ENCODE measurements at regions of chr10 and their contacts with region 1.

Region 1: DNA sequence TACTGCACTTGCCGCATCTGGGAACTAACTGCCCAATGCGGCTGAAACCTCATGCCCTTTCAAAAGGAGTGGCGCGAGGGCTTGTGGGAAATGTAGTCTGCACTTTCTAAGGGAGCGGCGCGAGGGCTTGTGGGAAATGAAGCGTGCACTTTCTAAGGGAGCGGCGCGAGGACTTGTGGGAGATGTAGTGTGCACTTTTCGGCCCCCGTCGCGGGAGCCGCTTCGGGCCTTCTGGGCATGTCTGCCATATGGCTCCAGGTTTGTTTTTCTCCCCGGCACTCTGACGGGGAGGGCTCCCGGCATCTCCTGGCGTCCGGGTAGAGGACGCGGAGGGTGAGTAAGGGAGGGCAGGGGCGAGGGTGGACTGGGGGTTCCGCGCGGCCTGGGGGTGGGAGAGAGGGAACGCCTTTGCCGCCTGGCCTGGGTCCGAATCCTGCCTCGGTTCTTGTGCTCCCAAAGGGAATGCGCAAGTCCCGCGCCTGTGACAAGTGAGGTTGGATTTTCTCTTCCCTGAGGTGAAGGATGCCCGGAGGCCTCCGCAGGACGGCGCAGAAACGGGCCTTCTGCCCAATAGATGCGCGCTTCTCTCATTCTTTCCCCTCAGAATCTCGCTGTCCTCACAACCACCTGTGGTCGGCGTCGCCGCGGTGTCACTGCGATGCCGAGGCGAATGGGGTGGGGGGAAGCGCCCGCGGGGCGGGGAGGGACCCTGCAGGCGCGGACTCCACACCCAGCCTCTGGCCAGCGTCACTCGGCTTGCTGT is at the start of gene ZNF37A:
- DNase-seq: peak; percentile 82 to 94 (median 85)
- H3K4me3 ChIP-seq: peak within 1 kb of the TSS; percentile 59 to 87
- H3K4me3 Mint-ChIP-seq: peak within 1 kb of the TSS; percentile 91 to 94 (median 93)
- H3K27ac ChIP-seq: peak within 1 kb of the TSS; percentile 86
- H3K27ac Mint-ChIP-seq: peak within 1 kb of the TSS; percentile 90 to 98 (median 95)
- H3K4me1 ChIP-seq: peaks cover 18% of the 10 kb centered on the region
- H3K4me1 Mint-ChIP-seq: peaks cover 21 to 41% (median 31%) of the 10 kb centered on the region in 4 donors
- H3K27me3 ChIP-seq: no peaks in the 10 kb centered on the region
- H3K27me3 Mint-ChIP-seq: peaks cover 0 to 2% of the 10 kb centered on the region in 2 donors
- total RNA-seq, gene ZNF37A: 22.8 to 27.1 TPM

Region 2: GRCh38 chr10:37857287-37858211 is 236.8 kb before region 1 on chr10 and contains the start of gene ZNF248:
- CTCF ChIA-PET with region 1: no interaction called
- POLR2A ChIA-PET with region 1: interaction called, 3 read pairs
- intact Hi-C with region 1: loop called (anchors 1 kb)
- DNase-seq: peak; percentile 94 to 96 (median 95)
- H3K4me3 ChIP-seq: peak within 1 kb of the TSS; percentile 86 to 92
- H3K4me3 Mint-ChIP-seq: peak within 1 kb of the TSS; percentile 87 to 99 (median 91)
- H3K27ac ChIP-seq: peak within 1 kb of the TSS; percentile 97
- H3K27ac Mint-ChIP-seq: peak within 1 kb of the TSS; percentile 92 to 99 (median 98)
- H3K4me1 ChIP-seq: peaks cover 19% of the 10 kb centered on the region
- H3K4me1 Mint-ChIP-seq: peaks cover 28 to 48% (median 38%) of the 10 kb centered on the region in 4 donors
- H3K27me3 ChIP-seq: no peaks in the 10 kb centered on the region
- H3K27me3 Mint-ChIP-seq: no peaks in the 10 kb centered on the region
- total RNA-seq, gene ZNF248: 18.0 to 18.7 TPM

Region 3: GRCh38 chr10:37976091-37976879 is 118.1 kb before region 1 on chr10 and contains the start of gene ZNF25:
- CTCF ChIA-PET with region 1: interaction called, 25 read pairs
- POLR2A ChIA-PET with region 1: interaction called, 28 read pairs
- intact Hi-C with region 1: loop called (anchors 1 kb)
- DNase-seq: peak; percentile 96 to 99 (median 97)
- H3K4me3 ChIP-seq: peak within 1 kb of the TSS; percentile 77 to 85
- H3K4me3 Mint-ChIP-seq: peak within 1 kb of the TSS; percentile 86 to 98 (median 93)
- H3K27ac ChIP-seq: peak within 1 kb of the TSS; percentile 94
- H3K27ac Mint-ChIP-seq: peak within 1 kb of the TSS; percentile 96 to 99 (median 97)
- H3K4me1 ChIP-seq: peaks cover 22% of the 10 kb centered on the region
- H3K4me1 Mint-ChIP-seq: peaks cover 20 to 31% (median 25%) of the 10 kb centered on the region in 4 donors
- H3K27me3 ChIP-seq: no peaks in the 10 kb centered on the region
- H3K27me3 Mint-ChIP-seq: no peaks in the 10 kb centered on the region
- total RNA-seq, gene ZNF25: 13.6 to 14.7 TPM

Region 4: DNA sequence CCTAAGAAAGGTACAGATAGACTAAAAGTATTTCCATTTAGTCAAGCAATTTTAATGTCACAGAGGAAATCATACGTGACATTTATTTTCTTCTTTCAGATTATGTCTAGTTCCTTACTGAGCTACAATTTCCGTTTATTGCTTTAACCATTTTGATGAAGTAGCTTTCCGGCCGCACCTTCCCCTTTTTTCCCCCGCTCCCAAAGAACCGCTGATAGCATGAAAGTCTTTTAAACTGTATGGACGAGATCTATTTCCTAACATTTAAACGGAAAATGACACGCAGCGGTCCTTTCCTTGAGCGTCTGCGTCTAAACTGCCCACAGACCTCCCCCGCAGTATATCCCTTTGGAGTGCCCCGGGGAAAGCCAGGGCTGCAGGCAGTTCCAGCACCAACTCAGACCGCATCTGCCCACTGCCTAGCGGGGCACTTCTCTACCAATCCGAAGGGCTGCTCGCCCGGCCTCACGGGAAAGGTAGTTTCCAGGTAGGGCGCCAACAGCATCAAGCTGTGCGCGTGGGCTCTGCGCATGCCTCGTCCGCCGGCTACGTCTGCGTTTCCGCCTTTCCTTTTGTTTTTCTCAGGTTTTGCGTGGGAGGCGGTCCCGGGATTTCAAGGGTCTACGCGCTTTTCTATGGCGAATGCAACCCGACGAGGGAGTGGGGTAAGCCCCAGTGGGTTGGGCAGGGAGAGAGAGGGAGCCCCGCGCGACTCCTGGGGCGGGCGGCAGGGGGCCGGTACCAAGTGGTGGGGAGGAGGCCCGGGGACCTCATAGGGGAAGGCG is 84.0 kb before region 1 on chr10 and contains the start of gene ZNF33A:
- CTCF ChIA-PET with region 1: interaction called, 5 read pairs
- POLR2A ChIA-PET with region 1: interaction called, 14 read pairs
- intact Hi-C with region 1: loop called (anchors 1 kb)
- DNase-seq: peak; percentile 93 to 96 (median 94)
- H3K4me3 ChIP-seq: peak within 1 kb of the TSS; percentile 69 to 83
- H3K4me3 Mint-ChIP-seq: peak within 1 kb of the TSS; percentile 86 to 98 (median 94)
- H3K27ac ChIP-seq: peak within 1 kb of the TSS; percentile 91
- H3K27ac Mint-ChIP-seq: peak within 1 kb of the TSS; percentile 99 to 100 (median 100)
- H3K4me1 ChIP-seq: peaks cover 37% of the 10 kb centered on the region
- H3K4me1 Mint-ChIP-seq: peaks cover 22 to 53% (median 38%) of the 10 kb centered on the region in 4 donors
- H3K27me3 ChIP-seq: no peaks in the 10 kb centered on the region
- H3K27me3 Mint-ChIP-seq: no peaks in the 10 kb centered on the region
- total RNA-seq, gene ZNF33A: 69.0 to 71.4 TPM

Region 5: GRCh38 chr10:38038107-38038931 is 56.0 kb before region 1 on chr10:
- CTCF ChIA-PET with region 1: no interaction called
- POLR2A ChIA-PET with region 1: no interaction called
- intact Hi-C with region 1: loop called (anchors 2 kb)
- DNase-seq: peak; percentile 11 to 45 (median 33)
- H3K4me3 ChIP-seq: peak overlapping the region; percentile 20 to 34
- H3K4me3 Mint-ChIP-seq: peak overlapping the region; percentile 81 to 91 (median 88)
- H3K27ac ChIP-seq: peak overlapping the region; percentile 66
- H3K27ac Mint-ChIP-seq: peak overlapping the region; percentile 71 to 98 (median 95)
- H3K4me1 ChIP-seq: peaks cover 36% of the 10 kb centered on the region
- H3K4me1 Mint-ChIP-seq: peaks cover 36 to 54% (median 37%) of the 10 kb centered on the region in 4 donors
- H3K27me3 ChIP-seq: no peaks in the 10 kb centered on the region
- H3K27me3 Mint-ChIP-seq: no peaks in the 10 kb centered on the region

Region 6: GRCh38 chr10:38076687-38077086 is 17.7 kb before region 1 on chr10:
- CTCF ChIA-PET with region 1: no interaction called
- POLR2A ChIA-PET with region 1: no interaction called
- intact Hi-C with region 1: no loop called
- DNase-seq: no peak
- H3K4me3 ChIP-seq: no peak overlapping the region
- H3K4me3 Mint-ChIP-seq: no peak overlapping the region
- H3K27ac ChIP-seq: no peak overlapping the region
- H3K27ac Mint-ChIP-seq: peak overlapping the region in 1 of 7 donors; percentile 9
- H3K4me1 ChIP-seq: no peaks in the 10 kb centered on the region
- H3K4me1 Mint-ChIP-seq: no peaks in the 10 kb centered on the region
- H3K27me3 ChIP-seq: no peaks in the 10 kb centered on the region
- H3K27me3 Mint-ChIP-seq: peaks cover 2 to 7% of the 10 kb centered on the region in 2 donors

Region 7: DNA sequence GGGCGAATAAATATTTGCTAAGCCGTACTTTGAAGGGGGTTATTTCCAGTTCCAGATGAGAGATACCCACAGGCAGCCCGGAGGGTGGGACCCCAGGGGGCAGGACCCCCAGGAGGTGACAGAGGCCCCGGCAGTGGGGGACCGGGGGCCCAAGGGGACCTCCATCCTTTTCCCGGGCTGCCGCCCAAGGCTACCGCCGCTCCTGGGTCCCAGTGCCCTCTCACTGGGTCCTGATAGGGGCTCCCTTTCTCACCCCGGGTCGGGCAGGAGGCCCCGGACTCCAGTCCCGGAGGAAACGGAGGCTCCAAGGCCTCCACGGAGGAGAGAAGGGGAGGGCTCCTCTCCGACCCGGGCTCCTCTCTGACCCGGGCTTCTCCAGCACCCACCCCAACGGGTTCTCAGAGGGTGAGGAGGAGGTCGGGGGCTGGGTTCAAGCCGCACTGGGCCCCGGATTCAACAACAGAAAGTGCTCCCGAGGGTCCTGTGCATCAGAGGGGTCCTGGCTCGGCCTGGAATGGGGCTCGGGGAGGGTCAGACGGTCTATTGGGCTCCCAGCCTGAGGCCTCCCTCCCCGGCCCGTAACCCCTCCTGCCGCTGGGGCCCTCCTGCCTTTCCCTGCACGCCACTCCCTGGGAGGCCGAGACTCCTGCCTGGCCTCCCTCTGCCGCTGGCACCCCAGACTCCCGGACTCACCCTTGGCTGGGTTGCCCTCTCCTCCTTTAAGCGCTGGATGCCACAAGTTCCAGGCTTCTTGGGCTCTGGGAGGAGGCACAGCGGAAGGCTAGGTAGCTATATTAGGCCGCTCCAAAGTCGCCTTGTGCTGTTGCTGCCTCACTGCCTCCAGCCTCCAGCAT is 62.3 kb after region 1 on chr10:
- CTCF ChIA-PET with region 1: no interaction called
- POLR2A ChIA-PET with region 1: no interaction called
- intact Hi-C with region 1: no loop called
- DNase-seq: no peak
- H3K4me3 ChIP-seq: no peak overlapping the region
- H3K4me3 Mint-ChIP-seq: no peak overlapping the region
- H3K27ac ChIP-seq: no peak overlapping the region
- H3K27ac Mint-ChIP-seq: no peak overlapping the region
- H3K4me1 ChIP-seq: no peaks in the 10 kb centered on the region
- H3K4me1 Mint-ChIP-seq: no peaks in the 10 kb centered on the region
- H3K27me3 ChIP-seq: no peaks in the 10 kb centered on the region
- H3K27me3 Mint-ChIP-seq: no peaks in the 10 kb centered on the region